GM12878 (cell line): ENCODE measurements at regions of chr9 and their contacts with region 1.

Region 1: GRCh38 chr9:123349691-123350480 is 6.1 kb upstream of the CRB2 start:
- DNase-seq: no peak
- ATAC-seq: peak; percentile 83
- H3K4me3 ChIP-seq: no peak overlapping the region
- H3K27ac ChIP-seq: no peak overlapping the region
- H3K4me1 ChIP-seq: peaks cover 14% of the 10 kb centered on the region
- H3K27me3 ChIP-seq: no peaks in the 10 kb centered on the region; a peak in 1 of 4 replicates
- CTCF ChIP-seq: peak; percentile 95 to 98 (median 97); a peak in 5 of 6 replicates
- EP300 ChIP-seq: no peak
- POLR2A ChIP-seq: no peak
- RAD21 ChIP-seq: peak; percentile 99

Region 2: GRCh38 chr9:122464633-122465567 is 885.0 kb before region 1 on chr9:
- CTCF ChIA-PET with region 1: interaction called, 4 read pairs
- POLR2A ChIA-PET with region 1: no interaction called
- RAD21 ChIA-PET with region 1: interaction called, 5 read pairs
- SMC1A ChIA-PET with region 1: interaction called, 3 read pairs
- in situ Hi-C with region 1: loop called (anchors 10 kb)
- intact Hi-C with region 1: no loop called
- DNase-seq: peak; percentile 45
- ATAC-seq: peak; percentile 84
- H3K4me3 ChIP-seq: peak overlapping the region; percentile 54; the same call in 1 of the 2 replicates
- H3K27ac ChIP-seq: peak overlapping the region; percentile 4; the same call in 1 of the 2 replicates
- H3K4me1 ChIP-seq: no peaks in the 10 kb centered on the region
- H3K27me3 ChIP-seq: no peaks in the 10 kb centered on the region; a peak in 1 of 4 replicates
- CTCF ChIP-seq: peak; percentile 76 to 81 (median 79)
- EP300 ChIP-seq: no peak
- POLR2A ChIP-seq: no peak
- RAD21 ChIP-seq: peak; percentile 77

Region 3: DNA sequence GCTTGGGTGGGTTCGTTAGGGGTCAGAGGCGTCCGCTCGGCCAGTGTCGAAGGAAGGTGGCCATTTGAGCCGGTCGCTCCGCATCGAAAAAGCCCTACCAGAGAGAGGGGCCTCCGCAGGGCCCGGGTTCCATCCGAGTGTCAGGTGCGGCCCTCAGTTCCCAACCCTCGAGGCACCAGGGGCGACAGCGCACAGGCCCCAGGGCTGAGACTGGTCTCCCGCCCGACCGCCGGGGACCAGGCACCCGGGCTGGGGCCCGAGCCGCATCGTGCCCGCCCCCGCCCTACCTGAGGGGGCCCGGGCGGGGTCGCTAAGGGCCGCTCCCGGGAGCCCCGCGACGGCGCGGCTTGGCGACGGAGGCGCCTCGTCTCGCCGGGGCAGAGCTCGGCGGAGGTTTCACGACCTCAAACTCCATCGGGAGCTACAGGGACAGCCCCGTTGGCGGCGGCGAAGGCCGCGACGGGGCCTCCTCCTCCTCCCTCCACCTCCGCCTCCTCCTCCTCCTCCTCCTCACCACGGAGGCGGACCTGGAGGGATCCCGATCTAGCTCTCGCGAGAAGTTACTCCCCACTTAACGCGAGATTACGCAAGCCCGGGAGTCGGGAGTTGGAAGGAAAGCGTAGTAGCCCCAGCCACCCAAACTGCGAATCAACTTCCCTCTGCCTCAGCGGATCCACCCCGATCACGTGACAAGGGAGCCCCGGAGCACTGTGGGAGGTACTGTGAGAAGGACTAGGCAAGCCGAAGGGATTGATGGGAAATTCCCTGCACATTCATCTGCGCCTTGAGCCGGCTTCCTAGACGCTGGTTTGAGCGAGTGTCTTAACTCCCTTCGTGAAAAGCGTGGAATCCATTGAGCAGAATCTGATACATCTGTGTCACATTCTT is 444.8 kb before region 1 on chr9 and contains the start of gene RC3H2:
- CTCF ChIA-PET with region 1: no interaction called
- POLR2A ChIA-PET with region 1: no interaction called
- RAD21 ChIA-PET with region 1: interaction called, 4 read pairs
- SMC1A ChIA-PET with region 1: interaction called, 6 read pairs
- in situ Hi-C with region 1: no loop called
- intact Hi-C with region 1: loop called (anchors 10 kb)
- DNase-seq: peak; percentile 99
- ATAC-seq: peak; percentile 88
- H3K4me3 ChIP-seq: peak within 1 kb of the TSS; percentile 98
- H3K27ac ChIP-seq: peak within 1 kb of the TSS; percentile 92
- H3K4me1 ChIP-seq: peaks cover 6% of the 10 kb centered on the region
- H3K27me3 ChIP-seq: no peaks in the 10 kb centered on the region
- CTCF ChIP-seq: no peak
- EP300 ChIP-seq: peak; percentile 31 to 38; a peak in 1 of 4 replicates
- POLR2A ChIP-seq: peak; percentile 94
- RAD21 ChIP-seq: no peak
- polyA plus RNA-seq, gene RC3H2: 7.2 to 9.1 TPM

Region 4: DNA sequence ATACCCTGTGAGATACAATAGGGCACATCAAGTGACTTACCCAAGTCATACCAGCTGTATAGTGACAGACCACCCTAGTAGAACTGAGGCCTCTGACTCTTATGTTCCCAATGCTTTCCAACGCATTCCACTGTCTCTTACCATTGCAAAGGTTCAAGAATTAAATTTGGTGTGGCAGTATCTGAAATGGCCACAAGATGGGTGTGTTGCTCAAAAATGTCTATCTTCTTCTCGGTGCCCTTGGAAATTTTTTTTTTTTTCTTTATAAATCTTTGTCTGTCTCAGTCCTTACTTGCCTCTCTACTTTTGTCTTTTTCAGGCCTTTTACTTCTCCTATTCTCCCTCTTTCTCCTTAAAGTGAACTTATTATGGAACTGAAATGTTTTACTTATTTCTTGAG is 268.1 kb before region 1 on chr9:
- CTCF ChIA-PET with region 1: interaction called, 115 read pairs
- POLR2A ChIA-PET with region 1: no interaction called
- RAD21 ChIA-PET with region 1: interaction called, 47 read pairs
- SMC1A ChIA-PET with region 1: interaction called, 52 read pairs
- in situ Hi-C with region 1: loop called (anchors 5 kb)
- intact Hi-C with region 1: loop called (anchors 1 kb)
- DNase-seq: peak; percentile 13
- ATAC-seq: peak; percentile 78
- H3K4me3 ChIP-seq: no peak overlapping the region
- H3K27ac ChIP-seq: no peak overlapping the region; the same call in 1 of the 2 replicates
- H3K4me1 ChIP-seq: no peaks in the 10 kb centered on the region
- H3K27me3 ChIP-seq: no peaks in the 10 kb centered on the region
- CTCF ChIP-seq: peak; percentile 43 to 75 (median 69); a peak in 5 of 6 replicates
- EP300 ChIP-seq: no peak
- POLR2A ChIP-seq: no peak
- RAD21 ChIP-seq: peak; percentile 77

Region 5: GRCh38 chr9:123225374-123225813 is 124.5 kb before region 1 on chr9:
- CTCF ChIA-PET with region 1: interaction called, 30 read pairs
- POLR2A ChIA-PET with region 1: no interaction called
- RAD21 ChIA-PET with region 1: interaction called, 29 read pairs
- SMC1A ChIA-PET with region 1: interaction called, 32 read pairs
- in situ Hi-C with region 1: no loop called
- intact Hi-C with region 1: no loop called
- DNase-seq: peak; percentile 81
- ATAC-seq: peak; percentile 98
- H3K4me3 ChIP-seq: no peak overlapping the region
- H3K27ac ChIP-seq: peak overlapping the region; percentile 71
- H3K4me1 ChIP-seq: peaks cover 27% of the 10 kb centered on the region
- H3K27me3 ChIP-seq: no peaks in the 10 kb centered on the region
- CTCF ChIP-seq: peak; percentile 57 to 78 (median 73)
- EP300 ChIP-seq: no peak
- POLR2A ChIP-seq: no peak
- RAD21 ChIP-seq: peak; percentile 85

Region 6: GRCh38 chr9:123338710-123339665 is 10.9 kb before region 1 on chr9:
- CTCF ChIA-PET with region 1: interaction called, 25 read pairs
- POLR2A ChIA-PET with region 1: interaction called, 4 read pairs
- RAD21 ChIA-PET with region 1: interaction called, 13 read pairs
- SMC1A ChIA-PET with region 1: interaction called, 24 read pairs
- in situ Hi-C with region 1: no loop called
- intact Hi-C with region 1: no loop called
- DNase-seq: peak; percentile 94
- ATAC-seq: peak; percentile 80
- H3K4me3 ChIP-seq: peak overlapping the region; percentile 60
- H3K27ac ChIP-seq: peak overlapping the region; percentile 99
- H3K4me1 ChIP-seq: peaks cover 90% of the 10 kb centered on the region
- H3K27me3 ChIP-seq: no peaks in the 10 kb centered on the region
- CTCF ChIP-seq: no peak
- EP300 ChIP-seq: peak in 1 of 2 experiments; percentile 88; a peak in 3 of 4 replicates
- POLR2A ChIP-seq: peak; percentile 80
- RAD21 ChIP-seq: 0 out of 2 replicates have a peak, but pooled peaks have one; percentile 20

Region 7: GRCh38 chr9:123912167-123912897 is 562.4 kb after region 1 on chr9:
- CTCF ChIA-PET with region 1: no interaction called
- POLR2A ChIA-PET with region 1: no interaction called
- RAD21 ChIA-PET with region 1: no interaction called
- SMC1A ChIA-PET with region 1: no interaction called
- in situ Hi-C with region 1: no loop called
- intact Hi-C with region 1: no loop called
- DNase-seq: no peak
- ATAC-seq: no peak
- H3K4me3 ChIP-seq: no peak overlapping the region
- H3K27ac ChIP-seq: no peak overlapping the region
- H3K4me1 ChIP-seq: peaks cover 3% of the 10 kb centered on the region; the same call in 1 of the 2 replicates
- H3K27me3 ChIP-seq: no peaks in the 10 kb centered on the region
- CTCF ChIP-seq: no peak
- EP300 ChIP-seq: no peak
- POLR2A ChIP-seq: no peak
- RAD21 ChIP-seq: no peak

Region 8: DNA sequence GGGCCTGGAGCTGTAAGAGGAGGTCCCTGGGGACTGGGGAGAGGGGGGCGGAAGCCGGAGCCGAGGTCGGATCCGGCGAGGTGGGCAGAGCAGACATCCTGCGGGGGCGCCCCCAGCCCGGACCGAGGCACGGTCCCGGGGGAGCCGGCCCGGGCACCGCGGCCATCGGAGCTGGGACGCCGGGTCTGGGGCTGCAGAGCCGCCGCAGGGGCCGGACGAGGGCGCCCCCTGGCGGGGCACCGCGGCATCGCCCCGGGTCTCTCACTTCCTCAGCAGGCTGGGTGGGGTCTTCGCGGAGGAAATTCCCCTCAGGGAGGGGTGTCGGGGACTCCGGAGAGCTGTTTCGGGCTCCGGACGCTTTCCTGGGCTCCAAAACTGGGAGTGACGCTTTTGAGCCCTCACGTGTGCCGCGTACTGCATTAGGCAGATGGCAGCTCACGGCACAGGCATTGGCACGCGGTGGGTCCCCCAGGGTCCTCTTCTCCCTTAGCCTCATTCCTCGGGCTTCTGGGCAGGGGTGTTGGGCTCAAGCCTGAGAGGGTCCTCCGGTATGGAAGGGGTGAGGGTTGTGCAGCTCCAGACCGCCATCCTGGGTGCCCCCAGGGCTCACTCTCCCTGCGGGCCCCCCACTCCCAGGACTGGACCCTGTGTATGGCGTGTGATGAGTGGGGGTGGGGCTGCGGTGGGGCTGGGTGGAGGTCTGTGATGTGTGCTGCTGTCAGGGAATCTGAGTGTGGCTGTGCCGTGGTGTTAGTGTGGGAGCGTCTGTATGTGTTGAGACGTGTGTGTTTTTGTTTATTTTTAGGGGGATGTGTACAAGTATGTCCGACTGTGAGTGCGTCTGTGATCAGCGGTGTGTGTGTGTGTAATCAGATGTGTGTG is 691.3 kb after region 1 on chr9:
- CTCF ChIA-PET with region 1: interaction called, 6 read pairs
- POLR2A ChIA-PET with region 1: no interaction called
- RAD21 ChIA-PET with region 1: interaction called, 13 read pairs
- SMC1A ChIA-PET with region 1: no interaction called
- in situ Hi-C with region 1: no loop called
- intact Hi-C with region 1: no loop called
- DNase-seq: no peak
- ATAC-seq: peak; percentile 85
- H3K4me3 ChIP-seq: peak overlapping the region; percentile 28; the same call in 1 of the 2 replicates
- H3K27ac ChIP-seq: no peak overlapping the region
- H3K4me1 ChIP-seq: peaks cover 6% of the 10 kb centered on the region
- H3K27me3 ChIP-seq: peaks cover 2 to 6% of the 10 kb centered on the region in 2 experiments
- CTCF ChIP-seq: peak; percentile 87 to 95 (median 90)
- EP300 ChIP-seq: no peak
- POLR2A ChIP-seq: no peak
- RAD21 ChIP-seq: peak; percentile 85